ENCODE measurements at regions of chr2 and their contacts with region 1.

Region 1: GRCh38 chr2:148524519-148524919 is 120.0 kb upstream of the EPC2 start:
- DNase-seq: peak; percentile 53
- H3K4me3 Mint-ChIP-seq: no peak overlapping the region
- H3K27ac Mint-ChIP-seq: peak overlapping the region; percentile 69
- H3K4me1 Mint-ChIP-seq: peaks cover 61% of the 10 kb centered on the region
- H3K27me3 Mint-ChIP-seq: no peaks in the 10 kb centered on the region

Region 2: DNA sequence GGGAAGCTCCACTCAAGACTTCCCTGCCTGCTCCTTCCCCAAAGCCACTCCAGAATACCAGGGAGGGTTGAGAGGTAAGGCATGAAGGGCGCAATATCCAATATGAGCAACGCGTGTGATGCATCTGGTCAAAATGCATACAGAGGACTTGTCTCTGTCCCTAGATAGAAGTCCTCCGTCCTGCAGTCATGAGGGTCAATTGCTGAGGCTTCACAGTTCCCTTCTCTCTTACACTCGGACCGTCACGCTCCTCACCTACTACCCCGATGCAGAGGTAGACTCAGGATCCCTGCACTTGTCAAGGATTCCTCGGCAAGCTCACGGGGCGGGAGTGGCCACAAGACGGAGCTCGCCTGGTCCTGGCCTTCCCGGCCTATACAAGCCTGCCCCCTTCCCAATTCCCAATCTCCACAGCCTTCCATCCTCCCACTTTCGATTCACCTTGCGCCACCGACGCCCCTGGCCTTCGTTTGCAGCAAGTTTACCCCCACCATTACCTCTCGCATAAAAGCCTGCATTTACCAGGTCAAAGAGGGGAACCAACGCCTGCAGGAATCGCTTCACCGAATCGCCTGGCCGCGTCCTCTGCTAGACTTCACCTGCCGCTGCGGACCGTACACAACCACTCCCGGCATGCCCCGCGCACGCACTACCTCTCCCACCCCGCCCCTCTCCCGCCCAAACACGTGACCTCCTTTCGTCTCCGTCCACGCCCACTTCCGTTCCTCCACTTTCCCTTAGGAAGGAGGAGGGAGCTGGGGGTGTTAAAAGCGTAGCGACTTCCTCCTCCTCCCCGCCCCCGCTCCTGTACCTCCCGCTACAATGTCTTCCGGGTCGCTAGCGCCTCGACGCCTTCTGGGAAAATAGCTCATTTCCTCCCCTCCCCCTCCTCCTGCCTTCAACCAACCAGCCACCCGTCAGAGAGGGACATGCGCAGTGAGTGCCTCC is 504.1 kb before region 1 on chr2 and contains the start of gene ORC4:
- intact Hi-C with region 1: loop called (anchors 2 kb)
- DNase-seq: peak; percentile 94
- H3K4me3 Mint-ChIP-seq: peak within 1 kb of the TSS; percentile 100
- H3K27ac Mint-ChIP-seq: peak within 1 kb of the TSS; percentile 93
- H3K4me1 Mint-ChIP-seq: peaks cover 44% of the 10 kb centered on the region
- H3K27me3 Mint-ChIP-seq: no peaks in the 10 kb centered on the region
- total RNA-seq, gene ORC4: 25.4 and 31.2 TPM in 2 replicates

Region 3: GRCh38 chr2:148416248-148416647 is 108.3 kb before region 1 on chr2:
- intact Hi-C with region 1: no loop called
- DNase-seq: no peak
- H3K4me3 Mint-ChIP-seq: no peak overlapping the region
- H3K27ac Mint-ChIP-seq: no peak overlapping the region
- H3K4me1 Mint-ChIP-seq: no peaks in the 10 kb centered on the region
- H3K27me3 Mint-ChIP-seq: no peaks in the 10 kb centered on the region

Region 4: GRCh38 chr2:148540022-148540421 is 15.5 kb after region 1 on chr2:
- intact Hi-C with region 1: loop called (anchors 1 kb)
- DNase-seq: no peak
- H3K4me3 Mint-ChIP-seq: peak overlapping the region; percentile 13
- H3K27ac Mint-ChIP-seq: peak overlapping the region; percentile 53
- H3K4me1 Mint-ChIP-seq: peaks cover 29% of the 10 kb centered on the region
- H3K27me3 Mint-ChIP-seq: no peaks in the 10 kb centered on the region

Region 5: GRCh38 chr2:148658807-148659722 is 134.5 kb after region 1 on chr2:
- intact Hi-C with region 1: loop called (anchors 1 kb)
- DNase-seq: no peak
- H3K4me3 Mint-ChIP-seq: peak overlapping the region; percentile 40
- H3K27ac Mint-ChIP-seq: peak overlapping the region; percentile 70
- H3K4me1 Mint-ChIP-seq: peaks cover 60% of the 10 kb centered on the region
- H3K27me3 Mint-ChIP-seq: no peaks in the 10 kb centered on the region

Region 6: DNA sequence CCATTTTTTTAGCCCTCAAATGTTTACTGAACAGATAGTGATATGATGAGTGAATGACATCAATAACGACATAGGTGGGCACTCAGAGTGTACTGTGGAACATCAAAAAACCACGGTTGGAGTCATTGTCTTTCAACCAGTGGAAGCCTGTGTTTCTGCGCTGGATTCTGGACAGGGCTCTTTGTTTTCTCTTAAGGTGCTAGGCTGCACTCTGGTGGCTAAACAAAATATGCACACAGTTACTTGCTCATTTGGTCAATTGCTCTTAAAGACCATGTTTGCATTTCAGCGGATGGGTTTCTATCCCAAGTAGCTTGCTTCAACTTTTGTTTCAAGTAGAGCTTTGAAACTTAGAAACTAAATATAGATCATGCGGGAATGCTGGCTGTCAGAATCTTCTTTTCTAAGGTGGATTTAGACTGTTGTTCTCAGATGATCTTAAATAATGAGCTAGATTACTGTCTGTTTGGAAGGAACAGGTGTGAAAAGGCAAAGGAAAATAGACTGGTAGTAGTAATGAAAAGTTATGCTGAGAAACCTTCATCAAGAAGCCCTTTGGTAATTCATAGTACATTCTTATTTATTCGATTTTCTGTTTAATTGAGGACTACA is 465.5 kb after region 1 on chr2:
- intact Hi-C with region 1: loop called (anchors 10 kb)
- DNase-seq: peak; percentile 26
- H3K4me3 Mint-ChIP-seq: no peak overlapping the region
- H3K27ac Mint-ChIP-seq: no peak overlapping the region
- H3K4me1 Mint-ChIP-seq: peaks cover 1% of the 10 kb centered on the region
- H3K27me3 Mint-ChIP-seq: no peaks in the 10 kb centered on the region